Heart left ventricle (tissue), 16 donors: ENCODE measurements at regions of chr16 and their contacts with region 1.

Region 1: GRCh38 chr16:67816240-67817031 is 9.7 kb downstream of the TSNAXIP1 start:
- DNase-seq: peak; percentile 85 to 92 (median 87)
- ATAC-seq: peak; percentile 79 to 97 (median 96)
- H3K4me3 ChIP-seq: peak overlapping the region in 1 of 12 donors; percentile 28
- H3K27ac ChIP-seq: no peak overlapping the region
- H3K4me1 ChIP-seq: peaks cover 0 to 6% (median 0%) of the 10 kb centered on the region in 12 donors
- H3K27me3 ChIP-seq: no peaks in the 10 kb centered on the region
- CTCF ChIP-seq: peak; percentile 100
- POLR2A ChIP-seq: peak in 1 of 2 donors; percentile 10

Region 2: GRCh38 chr16:67514382-67514828 is 302.0 kb before region 1 on chr16:
- intact Hi-C with region 1: loop called in 1 of 10 experiments (anchors 10 kb)
- DNase-seq: peak; percentile 77 to 90 (median 80)
- ATAC-seq: peak; percentile 42 to 74 (median 62)
- H3K4me3 ChIP-seq: no peak overlapping the region
- H3K27ac ChIP-seq: no peak overlapping the region
- H3K4me1 ChIP-seq: peaks cover 0 to 29% (median 0%) of the 10 kb centered on the region in 12 donors
- H3K27me3 ChIP-seq: no peaks in the 10 kb centered on the region
- CTCF ChIP-seq: peak; percentile 59 to 83 (median 72)
- POLR2A ChIP-seq: no peak

Region 3: GRCh38 chr16:67883872-67884261 is 67.4 kb after region 1 on chr16:
- intact Hi-C with region 1: loop called in 1 of 10 experiments (anchors 5 kb)
- DNase-seq: peak; percentile 47 to 80 (median 49)
- ATAC-seq: peak in 3 of 4 donors; percentile 11 to 41 (median 38)
- H3K4me3 ChIP-seq: no peak overlapping the region
- H3K27ac ChIP-seq: peak overlapping the region in 11 of 12 donors; percentile 44 to 94 (median 81)
- H3K4me1 ChIP-seq: peaks cover 0 to 56% (median 32%) of the 10 kb centered on the region in 12 donors
- H3K27me3 ChIP-seq: no peaks in the 10 kb centered on the region
- CTCF ChIP-seq: peak; percentile 74 to 92 (median 83)
- POLR2A ChIP-seq: no peak

Region 4: DNA sequence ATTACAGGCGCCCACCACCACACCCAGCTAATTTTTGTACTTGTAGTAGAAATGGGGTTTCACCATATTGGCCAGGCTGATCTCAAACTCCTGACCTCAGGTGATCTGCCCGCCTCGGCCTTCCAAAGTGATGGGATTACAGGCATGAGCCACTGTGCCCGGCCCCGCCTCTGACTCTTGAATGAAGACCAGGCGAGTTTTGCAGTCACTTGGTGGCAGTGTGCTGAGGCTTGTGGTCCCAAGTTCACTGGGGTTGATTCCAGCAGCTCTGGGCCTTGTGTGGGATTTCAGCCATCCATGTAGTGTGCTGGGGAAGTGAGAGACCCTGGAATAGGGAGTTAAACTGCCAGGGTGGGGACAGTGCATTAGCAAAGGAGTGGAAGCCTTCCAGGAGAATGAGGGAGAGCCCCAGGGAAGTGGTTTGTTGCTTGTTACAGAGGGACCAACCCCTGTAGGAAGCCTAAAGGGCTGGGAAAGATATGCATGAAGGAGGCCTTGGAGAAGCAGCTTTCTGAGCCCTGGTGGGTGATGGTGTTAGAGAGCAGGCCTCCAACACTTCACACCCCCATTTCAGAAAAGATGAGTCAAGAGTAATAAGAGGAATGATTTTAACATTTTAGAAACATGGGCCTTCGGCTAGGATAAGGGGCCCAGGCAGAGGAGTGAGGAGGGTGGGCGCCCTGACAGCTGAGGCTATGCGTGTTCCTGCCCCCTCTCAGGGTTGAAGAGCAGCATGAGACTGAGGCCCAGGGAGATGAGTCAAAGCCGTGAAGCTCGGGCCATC is 91.2 kb after region 1 on chr16:
- intact Hi-C with region 1: no loop called
- DNase-seq: no peak
- ATAC-seq: no peak
- H3K4me3 ChIP-seq: no peak overlapping the region
- H3K27ac ChIP-seq: no peak overlapping the region
- H3K4me1 ChIP-seq: peaks cover 0 to 10% (median 0%) of the 10 kb centered on the region in 12 donors
- H3K27me3 ChIP-seq: no peaks in the 10 kb centered on the region
- CTCF ChIP-seq: no peak
- POLR2A ChIP-seq: no peak

Region 5: GRCh38 chr16:67928561-67929364 is 112.3 kb after region 1 on chr16:
- intact Hi-C with region 1: loop called in 9 of 10 experiments (anchors 1 to 5 kb)
- DNase-seq: peak; percentile 63 to 86 (median 73)
- ATAC-seq: peak; percentile 37 to 69 (median 62)
- H3K4me3 ChIP-seq: no peak overlapping the region
- H3K27ac ChIP-seq: no peak overlapping the region
- H3K4me1 ChIP-seq: peaks cover 0 to 34% (median 15%) of the 10 kb centered on the region in 12 donors
- H3K27me3 ChIP-seq: no peaks in the 10 kb centered on the region
- CTCF ChIP-seq: peak; percentile 72 to 87 (median 83)
- POLR2A ChIP-seq: no peak

Region 6: GRCh38 chr16:68040507-68041288 is 224.3 kb after region 1 on chr16:
- intact Hi-C with region 1: loop called in 9 of 10 experiments (anchors 1 to 10 kb)
- DNase-seq: peak; percentile 76 to 92 (median 84)
- ATAC-seq: peak; percentile 84 to 95 (median 94)
- H3K4me3 ChIP-seq: no peak overlapping the region
- H3K27ac ChIP-seq: peak overlapping the region in 1 of 12 donors; percentile 72
- H3K4me1 ChIP-seq: peaks cover 0 to 42% (median 0%) of the 10 kb centered on the region in 12 donors
- H3K27me3 ChIP-seq: no peaks in the 10 kb centered on the region
- CTCF ChIP-seq: peak; percentile 70 to 89 (median 82)
- POLR2A ChIP-seq: no peak

Region 7: DNA sequence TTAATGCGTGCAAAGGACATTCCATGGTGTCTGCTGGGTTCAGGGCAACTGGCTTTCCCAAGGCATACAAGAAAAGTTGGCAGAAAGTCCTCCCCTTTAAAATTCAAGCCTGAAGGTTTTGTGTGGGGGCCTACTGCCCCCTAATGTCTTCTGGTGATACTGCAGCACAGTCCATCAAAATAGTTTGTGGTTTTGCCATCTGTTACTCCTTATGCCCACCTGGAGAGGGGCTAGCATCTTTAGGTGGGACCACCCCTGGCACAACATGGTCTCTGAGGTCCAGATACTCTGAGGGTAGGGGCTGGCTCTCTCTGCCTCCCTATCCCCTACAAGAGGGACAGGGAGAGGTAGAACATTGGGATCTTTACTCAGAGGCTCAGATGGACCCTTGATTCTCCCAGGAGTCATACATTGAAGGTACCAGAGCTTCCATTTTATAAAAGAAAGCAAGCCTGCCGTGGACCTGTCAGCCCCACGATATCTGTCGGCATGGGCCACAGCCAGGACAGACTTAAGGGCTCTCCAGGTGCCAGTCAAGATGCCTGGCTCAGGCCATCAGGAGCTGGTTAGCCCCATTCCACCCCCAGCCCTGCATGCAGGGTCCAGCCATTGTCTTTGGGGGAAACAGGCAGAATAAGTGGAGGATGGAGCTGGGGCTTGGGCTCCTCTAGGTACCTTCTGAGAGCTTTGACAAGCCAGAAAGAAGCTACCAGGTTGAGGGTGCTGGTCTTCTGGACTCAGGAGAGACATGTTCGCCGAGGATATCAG is 413.2 kb after region 1 on chr16:
- intact Hi-C with region 1: loop called in 3 of 10 experiments (anchors 5 to 10 kb)
- DNase-seq: peak in 2 of 5 donors; percentile 29 to 46
- ATAC-seq: peak; percentile 11 to 55 (median 36)
- H3K4me3 ChIP-seq: no peak overlapping the region
- H3K27ac ChIP-seq: peak overlapping the region in 2 of 12 donors; percentile 4 to 14
- H3K4me1 ChIP-seq: peaks cover 0 to 30% (median 15%) of the 10 kb centered on the region in 12 donors
- H3K27me3 ChIP-seq: no peaks in the 10 kb centered on the region
- CTCF ChIP-seq: peak; percentile 80 to 94 (median 90)
- POLR2A ChIP-seq: no peak